B cell (primary cell): ENCODE measurements at regions of chr3 and their contacts with region 1.

Region 1: DNA sequence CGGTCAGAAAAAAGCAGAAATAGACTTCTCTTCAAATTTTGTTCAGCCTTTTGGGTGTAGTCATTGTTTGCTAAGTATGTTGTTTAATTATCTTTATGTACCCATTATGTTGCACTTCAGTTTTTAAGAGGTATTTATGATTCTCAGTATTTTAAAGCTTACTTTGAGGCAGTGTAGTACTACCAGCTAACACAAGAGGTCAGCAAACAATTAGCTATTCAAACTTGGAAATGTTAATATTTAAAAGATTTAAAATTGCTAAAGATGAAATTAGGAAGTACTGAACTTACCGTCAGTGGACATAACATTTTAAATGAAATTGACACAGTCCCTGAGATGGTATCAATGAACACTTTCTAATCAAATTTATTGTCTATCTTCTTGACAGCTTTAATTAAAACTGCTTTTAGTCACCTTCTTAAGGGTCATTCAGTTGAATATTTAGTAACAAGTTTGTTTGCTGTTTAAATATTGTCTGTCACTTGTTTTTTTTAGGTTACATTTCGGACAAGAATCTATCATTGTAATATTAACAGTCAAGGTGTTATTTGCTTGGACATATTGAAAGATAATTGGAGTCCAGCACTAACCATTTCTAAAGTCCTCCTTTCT is 28.1 kb downstream of the NKIRAS1 start:
- DNase-seq: peak; percentile 66
- ATAC-seq: peak; percentile 58
- H3K4me3 ChIP-seq: no peak overlapping the region
- H3K4me3 Mint-ChIP-seq: no peak overlapping the region
- H3K27ac ChIP-seq: peak overlapping the region in 1 of 2 donors; percentile 14
- H3K27ac Mint-ChIP-seq: peak overlapping the region; percentile 27
- H3K4me1 ChIP-seq: no peaks in the 10 kb centered on the region
- H3K4me1 Mint-ChIP-seq: peaks cover 6% of the 10 kb centered on the region
- H3K27me3 ChIP-seq: no peaks in the 10 kb centered on the region
- H3K27me3 Mint-ChIP-seq: no peaks in the 10 kb centered on the region
- CTCF ChIP-seq: peak; percentile 95

Region 2: DNA sequence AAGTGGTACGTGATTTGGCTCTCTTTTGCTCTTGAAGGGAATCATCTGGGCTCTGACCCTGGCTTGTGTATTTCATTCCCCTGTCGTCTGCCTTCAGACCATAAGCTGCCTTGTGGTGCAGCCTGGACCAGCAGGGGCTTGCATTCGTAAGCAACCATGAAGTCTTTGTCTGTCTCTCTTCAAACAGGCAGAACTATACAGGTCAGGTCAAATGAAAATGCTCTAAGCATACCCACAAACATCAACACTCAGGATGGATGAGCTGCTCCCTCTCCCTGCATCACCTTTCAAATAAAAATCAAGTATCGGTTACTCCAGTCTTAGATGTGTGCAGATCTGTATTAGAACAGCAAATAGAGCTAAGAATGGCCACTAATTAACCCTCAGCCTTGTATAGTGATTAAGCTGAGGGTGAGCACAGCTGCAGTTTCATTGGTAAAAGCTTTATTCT is 351.6 kb before region 1 on chr3:
- CTCF ChIA-PET with region 1: no interaction called
- POLR2A ChIA-PET with region 1: no interaction called
- intact Hi-C with region 1: no loop called
- DNase-seq: no peak
- ATAC-seq: no peak
- H3K4me3 ChIP-seq: no peak overlapping the region
- H3K4me3 Mint-ChIP-seq: no peak overlapping the region
- H3K27ac ChIP-seq: no peak overlapping the region
- H3K27ac Mint-ChIP-seq: no peak overlapping the region
- H3K4me1 ChIP-seq: no peaks in the 10 kb centered on the region
- H3K4me1 Mint-ChIP-seq: peaks cover 2% of the 10 kb centered on the region
- H3K27me3 ChIP-seq: no peaks in the 10 kb centered on the region
- H3K27me3 Mint-ChIP-seq: no peaks in the 10 kb centered on the region
- CTCF ChIP-seq: no peak

Region 3: GRCh38 chr3:23834082-23834870 is 54.4 kb before region 1 on chr3:
- CTCF ChIA-PET with region 1: interaction called, 27 read pairs
- POLR2A ChIA-PET with region 1: no interaction called
- intact Hi-C with region 1: no loop called
- DNase-seq: no peak
- ATAC-seq: no peak
- H3K4me3 ChIP-seq: no peak overlapping the region
- H3K4me3 Mint-ChIP-seq: no peak overlapping the region
- H3K27ac ChIP-seq: no peak overlapping the region
- H3K27ac Mint-ChIP-seq: no peak overlapping the region
- H3K4me1 ChIP-seq: peaks cover 55 to 64% of the 10 kb centered on the region in 2 donors
- H3K4me1 Mint-ChIP-seq: peaks cover 69% of the 10 kb centered on the region
- H3K27me3 ChIP-seq: no peaks in the 10 kb centered on the region
- H3K27me3 Mint-ChIP-seq: no peaks in the 10 kb centered on the region
- CTCF ChIP-seq: peak; percentile 28

Region 4: GRCh38 chr3:23899354-23899753 is 10.6 kb after region 1 on chr3:
- CTCF ChIA-PET with region 1: interaction called, 17 read pairs
- POLR2A ChIA-PET with region 1: no interaction called
- intact Hi-C with region 1: no loop called
- DNase-seq: no peak
- ATAC-seq: no peak
- H3K4me3 ChIP-seq: no peak overlapping the region
- H3K4me3 Mint-ChIP-seq: no peak overlapping the region
- H3K27ac ChIP-seq: no peak overlapping the region
- H3K27ac Mint-ChIP-seq: no peak overlapping the region
- H3K4me1 ChIP-seq: no peaks in the 10 kb centered on the region
- H3K4me1 Mint-ChIP-seq: no peaks in the 10 kb centered on the region
- H3K27me3 ChIP-seq: no peaks in the 10 kb centered on the region
- H3K27me3 Mint-ChIP-seq: no peaks in the 10 kb centered on the region
- CTCF ChIP-seq: no peak

Region 5: DNA sequence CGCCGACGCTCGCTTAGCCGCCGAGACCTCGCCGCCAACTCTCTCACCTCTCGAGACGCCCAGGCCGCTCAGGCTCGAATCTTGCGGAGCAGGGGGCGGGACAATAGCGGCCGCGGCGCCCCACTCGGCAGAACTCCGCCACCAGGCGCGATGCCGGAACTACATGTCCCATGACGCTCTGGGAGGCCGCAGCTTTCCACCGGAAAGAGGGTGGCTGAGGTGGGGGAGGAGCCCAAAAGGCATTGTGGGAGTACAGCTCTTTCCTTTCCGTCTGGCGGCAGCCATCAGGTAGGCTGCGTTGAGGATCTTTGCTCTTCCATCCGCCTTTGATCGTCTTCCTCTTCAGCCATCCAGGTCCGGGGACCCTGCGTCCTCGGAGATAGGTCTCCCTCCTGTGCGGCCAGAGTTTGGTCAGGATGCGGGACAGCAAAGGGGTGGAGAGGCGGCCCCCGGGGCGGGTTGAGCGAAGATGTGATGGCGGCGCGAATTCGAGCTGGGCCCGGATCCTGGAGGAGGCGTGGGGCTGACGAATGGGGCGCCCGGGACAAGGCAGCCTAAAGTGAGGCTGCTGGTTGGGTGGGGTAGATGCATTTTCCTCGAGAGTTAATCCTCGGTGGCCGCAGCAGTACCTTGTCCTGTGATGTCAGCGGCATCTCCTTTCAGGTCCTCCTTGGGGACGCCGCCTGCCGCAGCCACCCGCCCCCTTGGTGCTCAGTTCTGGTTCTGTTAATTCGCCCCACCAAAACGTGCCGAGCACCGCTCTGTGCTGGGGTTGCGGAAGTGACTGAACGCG is 28.4 kb after region 1 on chr3 and contains the starts of genes NKIRAS1 and RPL15:
- CTCF ChIA-PET with region 1: interaction called, 11 read pairs
- POLR2A ChIA-PET with region 1: no interaction called
- intact Hi-C with region 1: loop called (anchors 2 kb)
- DNase-seq: peak; percentile 97
- ATAC-seq: peak; percentile 92
- H3K4me3 ChIP-seq: peak within 1 kb of the TSS; percentile 83 to 99 (median 99)
- H3K4me3 Mint-ChIP-seq: peak within 1 kb of the TSS; percentile 99
- H3K27ac ChIP-seq: peak within 1 kb of the TSS; percentile 85 to 94
- H3K27ac Mint-ChIP-seq: peak within 1 kb of the TSS; percentile 99
- H3K4me1 ChIP-seq: peaks cover 33 to 35% of the 10 kb centered on the region in 2 donors
- H3K4me1 Mint-ChIP-seq: peaks cover 51% of the 10 kb centered on the region
- H3K27me3 ChIP-seq: no peaks in the 10 kb centered on the region
- H3K27me3 Mint-ChIP-seq: peaks cover 4% of the 10 kb centered on the region
- CTCF ChIP-seq: peak; percentile 36
- total RNA-seq, gene NKIRAS1: 3.5 and 4.7 TPM in 2 replicates
- total RNA-seq, gene RPL15: 2,162 and 2,177 TPM in 2 replicates

Region 6: DNA sequence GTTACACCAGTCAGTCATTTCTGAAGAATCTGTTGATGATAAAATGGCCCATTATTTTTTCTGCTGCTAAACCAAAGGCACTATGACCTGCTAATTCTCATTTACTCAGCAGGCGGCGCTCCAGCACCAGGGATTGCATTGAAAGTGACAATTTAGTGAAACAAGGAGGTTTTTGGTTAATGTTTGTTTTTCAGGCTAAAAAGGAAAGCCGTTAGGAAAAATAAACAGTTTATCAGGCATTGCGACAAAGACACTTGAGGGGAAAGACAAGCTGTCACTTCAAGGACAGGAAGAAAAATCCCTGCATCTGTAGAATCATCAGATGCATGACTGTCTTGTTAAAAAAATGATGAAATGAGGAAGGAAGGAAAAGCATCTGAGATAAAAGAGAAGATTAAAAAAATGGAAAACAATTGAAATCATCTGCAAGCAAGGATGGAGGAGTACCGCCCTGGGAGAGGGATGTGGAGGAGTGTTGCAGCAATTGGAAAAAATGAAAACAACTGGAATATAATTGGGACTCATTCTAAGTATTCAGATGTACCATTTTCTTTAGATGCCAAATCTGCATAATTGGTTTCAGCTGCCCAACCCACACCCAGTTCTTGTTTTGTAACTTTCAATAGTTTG is 110.4 kb after region 1 on chr3:
- CTCF ChIA-PET with region 1: interaction called, 10 read pairs
- POLR2A ChIA-PET with region 1: no interaction called
- intact Hi-C with region 1: loop called (anchors 1 kb)
- DNase-seq: peak; percentile 65
- ATAC-seq: peak; percentile 47
- H3K4me3 ChIP-seq: no peak overlapping the region
- H3K4me3 Mint-ChIP-seq: no peak overlapping the region
- H3K27ac ChIP-seq: no peak overlapping the region
- H3K27ac Mint-ChIP-seq: no peak overlapping the region
- H3K4me1 ChIP-seq: peaks cover 4 to 7% of the 10 kb centered on the region in 2 donors
- H3K4me1 Mint-ChIP-seq: peaks cover 6% of the 10 kb centered on the region
- H3K27me3 ChIP-seq: no peaks in the 10 kb centered on the region
- H3K27me3 Mint-ChIP-seq: peaks cover 8% of the 10 kb centered on the region
- CTCF ChIP-seq: peak; percentile 94

Region 7: DNA sequence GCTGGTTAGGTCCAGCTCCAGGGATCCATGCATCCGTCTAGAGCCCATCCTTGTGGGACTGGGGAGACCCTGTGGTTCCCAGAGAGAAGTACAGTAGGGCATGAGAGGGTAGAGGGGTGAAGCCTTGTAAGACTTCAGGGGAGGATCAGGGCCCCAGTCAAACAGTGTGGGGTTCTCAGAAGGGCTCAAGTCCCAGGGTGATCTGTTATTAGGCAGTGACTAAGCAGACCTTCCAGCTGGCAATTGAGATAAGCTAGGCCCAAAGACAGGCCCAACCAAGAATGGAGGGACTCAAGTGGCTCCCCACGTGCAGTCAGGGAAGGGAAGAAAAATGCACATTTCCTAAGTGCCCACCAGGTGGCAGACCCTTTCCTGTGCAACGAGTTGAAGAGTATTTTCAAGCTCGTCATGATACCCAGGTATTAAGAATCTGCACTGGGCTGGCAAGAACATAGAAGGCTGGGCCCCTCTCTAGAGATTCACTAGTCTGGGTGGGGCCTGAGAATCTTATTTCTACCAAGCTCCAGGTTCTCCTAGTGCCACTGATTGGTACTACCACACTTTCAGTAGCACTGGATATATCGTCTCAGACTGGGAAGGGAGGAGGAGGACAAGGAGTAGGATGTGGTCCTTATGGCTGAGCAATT is 297.1 kb after region 1 on chr3:
- CTCF ChIA-PET with region 1: interaction called, 10 read pairs
- POLR2A ChIA-PET with region 1: no interaction called
- intact Hi-C with region 1: loop called (anchors 5 kb)
- DNase-seq: peak; percentile 42
- ATAC-seq: no peak
- H3K4me3 ChIP-seq: no peak overlapping the region
- H3K4me3 Mint-ChIP-seq: no peak overlapping the region
- H3K27ac ChIP-seq: no peak overlapping the region
- H3K27ac Mint-ChIP-seq: no peak overlapping the region
- H3K4me1 ChIP-seq: no peaks in the 10 kb centered on the region
- H3K4me1 Mint-ChIP-seq: no peaks in the 10 kb centered on the region
- H3K27me3 ChIP-seq: no peaks in the 10 kb centered on the region
- H3K27me3 Mint-ChIP-seq: no peaks in the 10 kb centered on the region
- CTCF ChIP-seq: peak; percentile 74

Region 8: DNA sequence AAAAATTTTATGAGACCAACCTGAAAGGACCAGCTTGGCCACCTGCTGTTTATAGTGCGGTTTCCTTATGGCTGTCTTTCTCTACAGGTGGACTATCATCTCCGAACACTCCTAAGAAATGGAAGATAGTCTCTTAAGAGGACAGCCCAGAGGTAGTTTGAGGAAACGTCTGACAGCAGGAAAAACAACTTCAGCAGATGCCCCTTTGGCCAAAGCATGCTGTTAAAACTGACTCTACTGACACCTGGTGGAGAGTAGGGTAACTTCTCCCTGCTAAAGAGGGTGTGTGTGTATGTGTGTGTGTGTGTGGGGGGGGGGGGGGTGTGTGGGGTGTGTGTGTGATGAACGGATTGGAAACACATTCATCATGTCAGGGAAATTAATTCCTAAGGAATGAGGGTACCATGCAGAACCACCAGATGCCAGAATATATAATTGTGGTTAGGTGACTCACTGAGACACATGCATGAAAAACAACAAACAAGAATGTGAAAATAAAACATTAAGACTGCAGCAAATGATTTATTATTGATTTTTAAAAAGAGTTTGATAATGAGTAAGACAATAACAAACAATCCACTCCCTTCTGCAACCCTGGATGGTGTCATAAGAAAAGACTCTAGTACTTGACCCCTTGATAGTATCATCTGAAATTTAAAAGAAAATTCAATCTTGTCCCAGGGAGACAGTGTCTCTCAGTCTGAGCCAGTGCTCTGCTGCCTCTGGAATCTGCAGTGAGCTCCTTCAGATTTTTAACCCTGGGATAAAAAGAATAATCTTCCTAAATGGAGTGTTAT is 349.4 kb after region 1 on chr3:
- CTCF ChIA-PET with region 1: interaction called, 92 read pairs
- POLR2A ChIA-PET with region 1: no interaction called
- intact Hi-C with region 1: loop called (anchors 1 kb)
- DNase-seq: peak; percentile 72
- ATAC-seq: peak; percentile 85
- H3K4me3 ChIP-seq: no peak overlapping the region
- H3K4me3 Mint-ChIP-seq: no peak overlapping the region
- H3K27ac ChIP-seq: no peak overlapping the region
- H3K27ac Mint-ChIP-seq: no peak overlapping the region
- H3K4me1 ChIP-seq: no peaks in the 10 kb centered on the region
- H3K4me1 Mint-ChIP-seq: peaks cover 4% of the 10 kb centered on the region
- H3K27me3 ChIP-seq: no peaks in the 10 kb centered on the region
- H3K27me3 Mint-ChIP-seq: no peaks in the 10 kb centered on the region
- CTCF ChIP-seq: peak; percentile 59